ENCODE measurements at regions of chrX and their contacts with region 1.

Region 1: DNA sequence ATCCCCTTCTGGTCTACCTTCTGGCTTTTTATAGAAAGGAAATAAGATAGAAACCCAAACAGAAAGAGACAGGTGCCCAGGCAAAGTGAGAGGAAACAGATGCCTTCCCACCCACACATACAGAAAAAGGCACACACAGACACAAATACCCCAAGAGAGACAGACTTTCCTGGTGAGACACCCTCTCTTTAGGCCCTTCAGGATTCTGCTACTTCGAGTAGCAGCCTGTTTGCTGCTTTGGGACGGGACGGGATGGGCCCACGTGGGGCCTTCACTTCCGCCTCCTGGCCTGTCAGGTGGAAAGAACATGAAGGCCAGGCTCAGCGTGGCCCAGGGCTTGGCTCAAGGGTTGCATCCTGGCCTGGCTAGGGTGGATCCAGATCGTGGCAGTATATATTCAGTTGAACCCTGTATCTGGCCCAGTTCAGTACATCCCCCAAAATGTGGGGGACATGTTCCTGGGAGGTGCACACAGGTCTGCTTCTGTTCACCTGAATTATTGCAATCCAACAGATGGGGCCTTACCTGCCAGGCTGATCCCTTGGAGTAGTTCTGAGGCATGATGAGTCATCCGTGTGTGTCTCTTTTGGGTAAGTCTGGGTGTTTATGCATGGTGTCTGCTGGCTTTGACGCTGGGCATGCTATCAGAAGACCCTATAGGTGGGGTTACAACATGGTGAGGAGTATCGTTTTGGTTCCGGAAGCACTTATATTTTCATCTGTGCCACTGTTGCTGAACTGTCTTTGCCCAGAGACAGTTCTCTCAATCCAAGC is 2.4 kb downstream of the ZNF275 start:
- DNase-seq: no peak
- ATAC-seq: no peak
- H3K4me3 ChIP-seq: no peak overlapping the region
- H3K27ac ChIP-seq: no peak overlapping the region; the same call in 2 of the 3 replicates
- H3K4me1 ChIP-seq: peaks cover 32 to 45% of the 10 kb centered on the region in 2 experiments
- H3K27me3 ChIP-seq: no peaks in the 10 kb centered on the region
- CTCF ChIP-seq: no peak
- EP300 ChIP-seq: no peak
- POLR2A ChIP-seq: no peak
- RAD21 ChIP-seq: no peak

Region 2: GRCh38 chrX:153226344-153227185 is 109.7 kb before region 1 on chrX:
- CTCF ChIA-PET with region 1: no interaction called
- POLR2A ChIA-PET with region 1: no interaction called
- in situ Hi-C with region 1: no loop called
- intact Hi-C with region 1: no loop called
- DNase-seq: peak; percentile 93 to 96 (median 94)
- ATAC-seq: peak; percentile 99
- H3K4me3 ChIP-seq: peak overlapping the region; percentile 40
- H3K27ac ChIP-seq: peak overlapping the region; percentile 76
- H3K4me1 ChIP-seq: peaks cover 6 to 8% of the 10 kb centered on the region in 2 experiments; a peak in 4 of 5 replicates
- H3K27me3 ChIP-seq: no peaks in the 10 kb centered on the region
- CTCF ChIP-seq: no peak
- EP300 ChIP-seq: no peak
- POLR2A ChIP-seq: 0 out of 2 replicates have a peak, but pooled peaks have one; percentile 26
- RAD21 ChIP-seq: no peak

Region 3: DNA sequence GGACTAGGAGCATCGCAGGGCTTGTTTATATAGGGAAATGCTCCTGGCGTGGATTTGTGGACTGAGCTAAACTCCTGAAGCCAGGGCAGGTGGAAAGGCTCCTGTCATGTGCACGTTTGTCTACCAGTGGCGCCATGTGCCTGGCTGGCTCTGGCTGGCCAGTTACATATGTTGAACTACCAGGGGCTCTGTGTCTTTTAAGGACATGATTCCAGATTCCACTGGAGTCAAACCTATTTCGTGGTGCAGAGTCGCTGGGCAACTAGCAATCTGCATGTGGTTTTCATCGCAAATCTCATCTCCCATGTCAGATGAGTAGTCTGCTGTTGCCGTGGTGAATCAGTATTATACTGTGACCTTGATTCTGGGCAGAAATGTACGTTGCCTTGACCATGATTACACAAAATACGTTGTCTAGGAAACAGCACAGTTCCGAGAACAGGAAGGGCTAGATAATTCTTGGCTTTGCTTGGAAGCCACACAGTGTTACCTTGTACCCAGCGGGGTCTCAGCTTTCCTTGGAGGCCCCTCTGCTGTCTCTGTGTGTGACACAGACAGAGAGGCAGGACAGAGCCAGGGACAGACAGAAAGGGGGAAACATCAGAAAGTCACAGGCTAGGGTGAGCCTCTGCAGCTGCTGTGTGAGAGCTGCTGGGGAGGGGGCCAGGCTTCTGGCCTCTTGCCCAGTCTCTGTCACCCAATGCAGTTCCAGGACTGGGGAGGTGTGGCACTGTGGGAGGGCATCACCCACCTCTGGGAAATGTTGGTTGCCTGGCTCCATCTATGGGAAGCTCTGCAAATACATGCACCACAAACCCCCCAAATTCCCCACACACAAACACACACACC is 45.6 kb after region 1 on chrX:
- CTCF ChIA-PET with region 1: no interaction called
- POLR2A ChIA-PET with region 1: interaction called, 3 read pairs
- in situ Hi-C with region 1: no loop called
- intact Hi-C with region 1: loop called (anchors 5 kb)
- DNase-seq: peak; percentile 62 to 75 (median 68)
- ATAC-seq: peak; percentile 89
- H3K4me3 ChIP-seq: no peak overlapping the region
- H3K27ac ChIP-seq: peak overlapping the region; percentile 65
- H3K4me1 ChIP-seq: peaks cover 33% of the 10 kb centered on the region in 2 experiments
- H3K27me3 ChIP-seq: no peaks in the 10 kb centered on the region; a peak in 1 of 5 replicates
- CTCF ChIP-seq: peak; percentile 46 to 57 (median 56)
- EP300 ChIP-seq: peak; percentile 59
- POLR2A ChIP-seq: no peak
- RAD21 ChIP-seq: peak; percentile 63 to 64

Measured in K562 (cell line).